ENCODE measurements at regions of chr1 and their contacts with region 1.

Region 1: GRCh38 chr1:84620720-84621313 is 46.6 kb upstream of the CTBS start:
- DNase-seq: peak; percentile 84
- ATAC-seq: peak; percentile 92
- H3K4me3 Mint-ChIP-seq: peak overlapping the region; percentile 83
- H3K27ac Mint-ChIP-seq: peak overlapping the region; percentile 94
- H3K4me1 Mint-ChIP-seq: peaks cover 21% of the 10 kb centered on the region
- H3K27me3 Mint-ChIP-seq: no peaks in the 10 kb centered on the region
- CTCF ChIP-seq: peak; percentile 100

Region 2: DNA sequence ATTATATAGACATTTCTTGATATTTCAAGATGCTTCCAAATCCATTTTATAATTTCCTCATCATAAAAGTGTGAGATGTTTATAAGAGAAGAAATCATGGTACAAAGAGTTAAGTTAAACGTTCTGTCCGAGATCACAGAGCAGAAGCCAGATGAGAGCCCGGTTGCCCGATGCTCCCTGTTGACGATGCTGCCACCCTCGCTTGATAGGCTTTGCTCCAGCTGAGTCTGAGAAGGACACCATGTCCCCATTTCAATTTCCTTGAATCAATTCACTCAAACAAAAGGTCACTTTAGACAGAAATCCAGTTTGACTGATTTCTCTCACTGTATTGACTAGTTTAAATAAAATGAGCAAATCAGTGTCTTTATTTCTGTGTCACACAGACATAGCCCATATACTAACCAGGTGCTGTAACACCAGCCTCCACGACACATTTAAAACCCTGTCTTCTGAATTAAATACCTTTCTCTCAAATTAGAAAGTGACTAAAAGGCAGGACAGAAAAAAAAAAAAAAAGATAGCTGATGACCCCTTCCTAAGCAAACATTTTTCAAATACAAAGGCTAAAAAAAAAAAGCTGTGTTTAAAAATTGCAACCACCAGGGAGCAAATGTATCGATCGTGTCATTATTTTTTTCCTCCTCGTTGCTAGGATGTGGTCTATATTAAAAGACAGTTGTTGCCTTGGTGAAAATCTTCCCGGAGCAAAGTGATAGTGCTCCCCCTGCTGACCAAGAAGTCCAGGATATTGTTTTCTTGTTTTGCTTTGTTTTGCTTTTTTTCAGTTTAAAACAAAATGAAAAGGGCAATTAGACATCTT is 187.3 kb before region 1 on chr1:
- CTCF ChIA-PET with region 1: interaction called, 14 read pairs
- POLR2A ChIA-PET with region 1: interaction called, 3 read pairs
- intact Hi-C with region 1: no loop called
- DNase-seq: peak; percentile 72
- ATAC-seq: peak; percentile 76
- H3K4me3 Mint-ChIP-seq: peak overlapping the region; percentile 64
- H3K27ac Mint-ChIP-seq: peak overlapping the region; percentile 45
- H3K4me1 Mint-ChIP-seq: peaks cover 7% of the 10 kb centered on the region
- H3K27me3 Mint-ChIP-seq: no peaks in the 10 kb centered on the region
- CTCF ChIP-seq: peak; percentile 73

Region 3: DNA sequence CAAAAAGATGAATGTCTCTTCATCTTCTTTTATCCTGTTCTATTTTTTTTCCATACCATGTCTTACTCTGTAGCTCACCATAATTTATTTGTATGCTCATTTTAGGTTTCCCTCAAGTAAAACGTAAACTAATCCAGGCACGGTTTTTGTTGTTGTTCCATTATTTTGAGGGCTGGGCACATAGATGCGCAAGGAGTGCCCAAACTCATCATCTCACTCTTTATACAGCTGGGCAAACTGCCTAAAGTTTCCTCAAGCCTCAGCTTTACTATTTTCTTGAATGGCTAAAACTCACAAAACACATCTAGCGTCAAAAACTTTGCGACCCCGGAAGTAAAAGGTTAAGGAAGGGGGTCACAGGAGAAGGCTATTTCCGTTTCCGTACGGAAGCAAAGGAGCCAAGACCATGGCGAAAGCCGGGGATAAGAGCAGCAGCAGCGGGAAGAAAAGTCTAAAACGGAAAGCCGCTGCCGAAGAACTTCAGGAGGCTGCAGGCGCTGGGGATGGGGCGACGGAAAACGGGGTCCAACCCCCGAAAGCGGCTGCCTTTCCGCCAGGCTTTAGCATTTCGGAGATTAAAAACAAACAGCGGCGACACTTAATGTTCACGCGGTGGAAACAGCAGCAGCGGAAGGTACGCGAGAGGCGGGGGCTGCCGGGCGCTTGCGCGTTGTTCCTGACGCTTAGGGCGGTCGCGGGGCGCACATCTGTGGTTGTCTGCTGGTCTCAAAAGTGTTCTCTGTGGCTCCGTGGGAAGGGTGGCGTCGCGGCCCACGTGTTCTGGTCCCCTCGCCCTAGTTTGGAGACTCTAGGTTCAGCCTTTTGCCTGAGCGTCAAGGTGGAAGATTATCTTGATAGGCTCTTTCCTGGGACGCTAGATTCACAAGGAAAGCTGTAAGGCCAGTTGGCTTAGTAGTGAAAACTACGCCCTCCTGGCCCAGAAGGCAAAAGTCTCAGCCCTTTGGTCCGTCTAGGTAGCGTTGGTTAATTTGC is 141.6 kb before region 1 on chr1 and contains the start of gene RPF1:
- CTCF ChIA-PET with region 1: interaction called, 21 read pairs
- POLR2A ChIA-PET with region 1: no interaction called
- intact Hi-C with region 1: no loop called
- DNase-seq: peak; percentile 87
- ATAC-seq: peak; percentile 95
- H3K4me3 Mint-ChIP-seq: peak within 1 kb of the TSS; percentile 99
- H3K27ac Mint-ChIP-seq: peak within 1 kb of the TSS; percentile 99
- H3K4me1 Mint-ChIP-seq: peaks cover 38% of the 10 kb centered on the region
- H3K27me3 Mint-ChIP-seq: peaks cover 16% of the 10 kb centered on the region
- CTCF ChIP-seq: no peak
- total RNA-seq, gene RPF1: 61.9 to 64.1 TPM

Region 4: GRCh38 chr1:84573967-84574842 is 46.6 kb before region 1 on chr1 and contains the start of gene CTBS:
- CTCF ChIA-PET with region 1: interaction called, 24 read pairs
- POLR2A ChIA-PET with region 1: interaction called, 5 read pairs
- intact Hi-C with region 1: loop called (anchors 5 kb)
- DNase-seq: peak; percentile 89
- ATAC-seq: peak; percentile 89
- H3K4me3 Mint-ChIP-seq: peak within 1 kb of the TSS; percentile 98
- H3K27ac Mint-ChIP-seq: peak within 1 kb of the TSS; percentile 99
- H3K4me1 Mint-ChIP-seq: peaks cover 38% of the 10 kb centered on the region
- H3K27me3 Mint-ChIP-seq: no peaks in the 10 kb centered on the region
- CTCF ChIP-seq: no peak
- total RNA-seq, gene CTBS: 13.5 to 18.3 TPM

Region 5: DNA sequence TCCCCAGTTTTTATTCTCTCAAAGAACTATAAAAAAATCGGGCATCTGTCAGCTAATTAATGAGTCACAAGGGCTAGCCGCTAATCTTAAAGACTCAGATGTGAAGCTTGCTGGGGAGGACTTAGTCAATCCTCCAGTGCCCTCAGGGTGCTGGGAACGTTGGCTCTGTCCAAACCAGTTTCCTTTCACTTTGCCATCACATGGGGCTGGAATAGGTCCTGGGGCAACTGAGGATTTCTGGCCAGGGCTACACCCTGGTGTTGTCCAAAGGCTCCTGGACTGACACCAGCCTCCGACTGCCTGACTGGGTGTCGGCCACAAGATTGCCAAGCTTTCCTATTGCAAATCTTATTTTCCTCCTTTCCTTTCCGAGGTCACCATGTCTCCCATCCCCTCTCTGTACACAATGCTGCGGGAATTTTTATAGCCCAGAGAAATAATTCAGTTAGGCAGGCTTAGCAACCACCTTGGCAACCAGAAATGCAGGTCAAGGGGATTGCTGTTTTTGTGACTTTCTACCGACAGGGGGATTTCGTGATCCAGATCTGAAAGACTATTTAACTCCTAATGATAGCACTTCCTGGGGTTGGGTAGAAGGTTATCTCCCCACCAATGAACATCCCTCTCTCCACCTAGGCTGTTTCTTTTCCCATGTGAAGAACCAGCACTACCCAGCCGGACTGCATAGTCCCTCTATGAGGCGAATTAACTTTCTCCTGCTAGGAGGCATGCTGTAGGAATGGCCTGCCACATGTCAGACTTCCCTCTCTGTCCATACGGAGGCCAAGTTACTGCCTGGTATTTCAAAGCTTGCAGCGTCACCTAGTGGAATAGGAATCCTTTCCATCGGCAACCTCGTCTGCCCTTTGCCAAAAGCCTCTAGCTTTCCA is 16.6 kb before region 1 on chr1:
- CTCF ChIA-PET with region 1: interaction called, 26 read pairs
- POLR2A ChIA-PET with region 1: interaction called, 3 read pairs
- intact Hi-C with region 1: no loop called
- DNase-seq: no peak
- ATAC-seq: no peak
- H3K4me3 Mint-ChIP-seq: no peak overlapping the region
- H3K27ac Mint-ChIP-seq: no peak overlapping the region
- H3K4me1 Mint-ChIP-seq: peaks cover 12% of the 10 kb centered on the region
- H3K27me3 Mint-ChIP-seq: no peaks in the 10 kb centered on the region
- CTCF ChIP-seq: no peak

Region 6: GRCh38 chr1:84772428-84772943 is 151.7 kb after region 1 on chr1:
- CTCF ChIA-PET with region 1: interaction called, 12 read pairs
- POLR2A ChIA-PET with region 1: no interaction called
- intact Hi-C with region 1: no loop called
- DNase-seq: peak; percentile 81
- ATAC-seq: peak; percentile 71
- H3K4me3 Mint-ChIP-seq: no peak overlapping the region
- H3K27ac Mint-ChIP-seq: no peak overlapping the region
- H3K4me1 Mint-ChIP-seq: no peaks in the 10 kb centered on the region
- H3K27me3 Mint-ChIP-seq: peaks cover 2% of the 10 kb centered on the region
- CTCF ChIP-seq: peak; percentile 95

Measured in activated CD8-positive, alpha-beta T cell treated with anti-CD3 and anti-CD28 coated beads for 36 hours (primary cell).